ENCODE measurements at regions of chr7 and their contacts with region 1.

Region 1: DNA sequence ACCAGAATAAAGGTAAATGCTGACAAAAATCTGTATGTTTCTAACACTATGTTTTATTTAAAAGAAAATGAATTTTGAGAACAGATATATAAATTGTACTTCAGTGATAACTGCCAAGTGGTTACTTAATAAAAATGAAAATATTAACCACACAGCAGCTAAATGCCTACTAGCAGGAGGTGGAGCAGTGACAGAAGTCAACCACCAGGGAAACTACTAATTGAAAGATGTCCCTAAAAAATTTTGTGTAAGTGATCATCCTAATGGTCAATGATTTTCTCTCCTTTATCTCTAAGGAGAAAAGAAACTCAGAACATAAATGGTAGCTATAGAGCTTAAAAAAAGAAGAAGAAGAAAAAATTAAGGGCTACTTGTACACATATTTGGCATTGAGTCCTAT is 22.9 kb downstream of the WNT16 start:
- DNase-seq: no peak
- H3K4me3 ChIP-seq: no peak overlapping the region
- H3K27ac ChIP-seq: no peak overlapping the region
- H3K4me1 ChIP-seq: no peaks in the 10 kb centered on the region
- H3K27me3 ChIP-seq: no peaks in the 10 kb centered on the region
- CTCF ChIP-seq: no peak

Region 2: DNA sequence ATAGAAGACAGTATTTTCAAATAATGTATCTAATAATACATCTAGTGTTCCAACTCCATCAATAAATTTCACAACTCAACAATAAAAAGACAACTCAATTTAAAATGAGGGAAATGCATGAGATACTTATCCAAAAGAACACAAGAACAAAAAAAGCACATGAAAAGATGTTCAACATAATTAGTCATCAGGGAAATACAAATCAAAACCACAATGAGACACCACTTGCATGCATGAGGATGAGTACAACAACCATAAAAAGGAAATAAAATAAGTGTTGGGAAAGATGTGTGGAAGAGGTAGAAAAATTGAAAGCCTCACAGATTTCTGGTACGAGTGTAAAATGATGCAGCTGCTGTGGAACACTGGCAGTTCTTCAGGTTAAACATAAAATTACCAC is 409.7 kb after region 1 on chr7:
- intact Hi-C with region 1: loop called (anchors 10 kb)
- DNase-seq: no peak
- H3K4me3 ChIP-seq: no peak overlapping the region
- H3K27ac ChIP-seq: no peak overlapping the region
- H3K4me1 ChIP-seq: no peaks in the 10 kb centered on the region
- H3K27me3 ChIP-seq: no peaks in the 10 kb centered on the region
- CTCF ChIP-seq: no peak